ENCODE measurements at regions of chr10 and their contacts with region 1.

Region 1: DNA sequence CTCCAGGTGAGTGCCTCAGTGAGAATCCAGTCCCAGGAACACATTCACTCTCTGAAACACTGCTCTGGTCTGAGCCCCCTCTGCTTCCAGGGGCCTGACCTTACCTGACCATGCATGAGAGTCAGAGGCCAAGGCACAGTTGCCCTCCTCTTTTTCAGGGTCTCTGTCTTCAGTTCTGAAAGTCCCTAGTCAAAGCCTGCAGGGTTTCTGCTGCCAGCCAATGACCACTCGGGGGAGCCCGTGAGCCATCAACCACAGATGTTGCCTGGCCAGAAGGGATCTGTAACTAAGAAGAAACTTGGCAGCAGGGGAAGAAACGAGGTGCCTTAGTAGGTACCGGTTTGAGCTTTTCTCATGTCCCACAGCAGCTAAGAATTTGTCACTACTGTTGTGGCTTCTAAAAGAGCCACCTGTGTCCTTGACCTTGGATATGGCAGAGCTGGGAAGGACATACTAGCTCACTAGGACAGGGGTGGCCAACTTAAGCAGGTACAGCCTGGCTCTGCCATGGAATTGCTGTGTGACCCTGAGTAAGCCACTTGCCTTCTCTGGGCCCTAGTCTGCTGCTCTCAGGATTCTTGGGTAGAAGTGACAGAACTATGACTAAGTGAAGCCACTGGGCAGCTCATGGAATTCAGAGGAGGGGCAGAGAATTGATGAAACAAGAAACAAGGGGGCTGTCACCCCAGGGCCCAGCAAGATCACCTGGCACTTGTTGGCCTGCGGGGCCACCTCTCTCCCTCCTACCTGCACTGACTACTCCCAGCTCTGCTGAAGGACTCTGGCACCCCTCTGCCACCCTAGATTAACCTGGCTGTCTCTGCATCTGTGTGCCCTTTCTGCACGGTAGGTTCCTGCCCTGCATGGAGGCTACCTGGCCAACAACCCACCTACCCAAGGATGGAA is 83.8 kb upstream of the GPR26 start:
- DNase-seq: peak; percentile 96
- H3K4me3 ChIP-seq: no peak overlapping the region
- H3K27ac ChIP-seq: no peak overlapping the region
- H3K4me1 ChIP-seq: peaks cover 7 to 25% (median 24%) of the 10 kb centered on the region in 4 donors
- H3K27me3 ChIP-seq: peaks cover 0 to 10% (median 2%) of the 10 kb centered on the region in 4 donors
- CTCF ChIP-seq: peak; percentile 82 to 85 (median 85)
- EP300 ChIP-seq: no peak
- POLR2A ChIP-seq: no peak

Region 2: DNA sequence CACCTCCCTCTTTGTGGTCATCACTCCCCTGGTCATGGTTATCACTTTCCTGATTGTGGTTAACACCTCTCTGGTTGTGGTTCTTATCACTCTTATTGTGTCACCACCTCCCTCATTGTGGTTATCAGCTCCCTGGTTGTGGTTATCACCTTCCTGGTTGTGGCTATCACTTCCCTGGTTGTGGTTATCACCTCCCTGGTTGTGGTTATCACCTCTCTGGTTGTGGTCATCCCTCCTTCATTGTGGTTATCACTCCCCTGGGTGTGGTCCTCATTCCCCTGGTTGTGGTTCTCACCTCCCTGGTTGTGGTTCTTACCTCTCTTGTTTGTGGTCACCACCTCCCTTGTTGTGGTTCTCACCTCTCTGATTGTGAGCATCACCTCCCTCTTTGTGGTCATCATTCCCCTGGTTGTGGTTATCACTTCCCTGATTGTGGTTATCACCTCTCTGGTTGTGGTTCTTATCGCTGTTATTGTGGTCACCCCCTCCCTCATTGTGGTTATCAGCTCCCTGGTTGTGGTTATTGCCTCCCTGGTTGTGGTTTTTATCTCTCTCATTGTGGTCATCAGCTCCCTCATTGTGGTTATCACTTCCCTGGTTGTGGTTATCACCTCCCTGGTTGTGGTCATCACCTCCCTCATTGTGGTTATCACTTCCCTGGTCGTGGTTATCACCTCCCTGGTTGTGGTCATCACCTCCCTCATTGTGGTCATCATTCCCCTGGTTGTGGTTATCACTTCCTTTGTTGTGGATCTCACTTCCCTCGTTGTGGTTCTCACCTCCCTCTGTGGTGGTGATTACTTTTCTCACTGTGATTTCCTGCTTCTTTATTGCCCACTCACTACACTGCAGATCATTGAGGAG is 190.5 kb after region 1 on chr10:
- intact Hi-C with region 1: loop called (anchors 10 kb)
- DNase-seq: no peak
- H3K4me3 ChIP-seq: no peak overlapping the region
- H3K27ac ChIP-seq: no peak overlapping the region
- H3K4me1 ChIP-seq: peaks cover 0 to 17% (median 3%) of the 10 kb centered on the region in 4 donors
- H3K27me3 ChIP-seq: no peaks in the 10 kb centered on the region
- CTCF ChIP-seq: no peak
- EP300 ChIP-seq: no peak
- POLR2A ChIP-seq: no peak

Measured in esophagus muscularis mucosa (tissue), 4 donors.